ENCODE measurements at regions of chr1 and their contacts with region 1.

Region 1: GRCh38 chr1:168234846-168235547 is 9.2 kb downstream of the SFT2D2 start:
- DNase-seq: peak; percentile 22 to 69
- ATAC-seq: peak; percentile 88 to 98 (median 97)
- H3K4me3 ChIP-seq: no peak overlapping the region
- H3K4me3 Mint-ChIP-seq: no peak overlapping the region
- H3K27ac ChIP-seq: no peak overlapping the region
- H3K27ac Mint-ChIP-seq: peak overlapping the region; percentile 65 to 71
- H3K4me1 ChIP-seq: peaks cover 3% of the 10 kb centered on the region
- H3K4me1 Mint-ChIP-seq: peaks cover 61 to 71% of the 10 kb centered on the region in 2 donors
- H3K27me3 ChIP-seq: no peaks in the 10 kb centered on the region
- H3K27me3 Mint-ChIP-seq: no peaks in the 10 kb centered on the region
- CTCF ChIP-seq: peak; percentile 70

Region 2: GRCh38 chr1:168365719-168366479 is 130.9 kb after region 1 on chr1:
- intact Hi-C with region 1: loop called (anchors 10 kb)
- DNase-seq: peak in 1 of 2 donors; percentile 65
- ATAC-seq: no peak
- H3K4me3 ChIP-seq: no peak overlapping the region
- H3K4me3 Mint-ChIP-seq: no peak overlapping the region
- H3K27ac ChIP-seq: no peak overlapping the region
- H3K27ac Mint-ChIP-seq: peak overlapping the region in 1 of 2 donors; percentile 1
- H3K4me1 ChIP-seq: peaks cover 36% of the 10 kb centered on the region
- H3K4me1 Mint-ChIP-seq: peaks cover 39 to 49% of the 10 kb centered on the region in 2 donors
- H3K27me3 ChIP-seq: no peaks in the 10 kb centered on the region
- H3K27me3 Mint-ChIP-seq: no peaks in the 10 kb centered on the region
- CTCF ChIP-seq: no peak